Activated CD8-positive, alpha-beta T cell treated with anti-CD3 and anti-CD28 coated beads, Interleukin-2, amount 10 ng/mL, durations not matched to agents 7 days and 5 days (primary cell): ENCODE measurements at regions of chrX and their contacts with region 1.

Region 1: GRCh38 chrX:136577552-136577951 is 45.5 kb downstream of the VGLL1 start:
- DNase-seq: peak; percentile 84
- ATAC-seq: peak; percentile 99
- H3K4me3 Mint-ChIP-seq: no peak overlapping the region
- H3K27ac Mint-ChIP-seq: peak overlapping the region; percentile 76
- H3K4me1 Mint-ChIP-seq: peaks cover 24% of the 10 kb centered on the region
- H3K27me3 Mint-ChIP-seq: no peaks in the 10 kb centered on the region

Region 2: GRCh38 chrX:136496770-136497598 is 80.6 kb before region 1 on chrX and contains the start of gene HTATSF1:
- CTCF ChIA-PET with region 1: interaction called, 10 read pairs
- POLR2A ChIA-PET with region 1: no interaction called
- DNase-seq: peak; percentile 92
- ATAC-seq: peak; percentile 84
- H3K4me3 Mint-ChIP-seq: peak within 1 kb of the TSS; percentile 91
- H3K27ac Mint-ChIP-seq: peak within 1 kb of the TSS; percentile 95
- H3K4me1 Mint-ChIP-seq: peaks cover 28% of the 10 kb centered on the region
- H3K27me3 Mint-ChIP-seq: peaks cover 11% of the 10 kb centered on the region
- total RNA-seq, gene HTATSF1: 93.6 to 96.2 TPM

Region 3: DNA sequence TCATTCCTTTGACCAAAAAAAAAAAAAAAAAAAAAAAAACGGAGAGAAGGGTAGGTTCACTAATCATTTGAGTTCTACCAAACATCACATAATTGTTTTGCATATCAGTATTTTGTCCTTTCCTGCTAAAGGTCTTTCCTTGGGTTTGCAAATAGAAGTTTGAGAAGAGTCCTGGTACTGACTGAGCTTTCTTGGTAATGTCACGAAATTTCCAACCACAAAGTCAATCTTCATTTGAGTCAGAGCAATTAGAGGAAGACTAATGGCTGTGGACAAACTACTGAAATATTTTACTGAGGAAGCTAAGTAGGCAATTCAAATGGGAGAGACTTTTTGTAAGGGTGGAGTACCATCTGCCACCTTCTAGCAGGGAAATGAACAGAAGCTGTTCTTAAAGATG is 48.7 kb after region 1 on chrX:
- CTCF ChIA-PET with region 1: interaction called, 13 read pairs
- POLR2A ChIA-PET with region 1: no interaction called
- DNase-seq: no peak
- ATAC-seq: peak; percentile 14
- H3K4me3 Mint-ChIP-seq: peak overlapping the region; percentile 60
- H3K27ac Mint-ChIP-seq: peak overlapping the region; percentile 90
- H3K4me1 Mint-ChIP-seq: peaks cover 98% of the 10 kb centered on the region
- H3K27me3 Mint-ChIP-seq: no peaks in the 10 kb centered on the region

Region 4: GRCh38 chrX:136694431-136695087 is 117.0 kb after region 1 on chrX:
- CTCF ChIA-PET with region 1: interaction called, 34 read pairs
- POLR2A ChIA-PET with region 1: no interaction called
- DNase-seq: peak; percentile 31
- ATAC-seq: peak; percentile 61
- H3K4me3 Mint-ChIP-seq: peak overlapping the region; percentile 45
- H3K27ac Mint-ChIP-seq: peak overlapping the region; percentile 93
- H3K4me1 Mint-ChIP-seq: peaks cover 81% of the 10 kb centered on the region
- H3K27me3 Mint-ChIP-seq: no peaks in the 10 kb centered on the region

Region 5: GRCh38 chrX:136759968-136760367 is 182.4 kb after region 1 on chrX:
- CTCF ChIA-PET with region 1: no interaction called
- POLR2A ChIA-PET with region 1: no interaction called
- DNase-seq: no peak
- ATAC-seq: peak; percentile 41
- H3K4me3 Mint-ChIP-seq: no peak overlapping the region
- H3K27ac Mint-ChIP-seq: peak overlapping the region; percentile 15
- H3K4me1 Mint-ChIP-seq: peaks cover 72% of the 10 kb centered on the region
- H3K27me3 Mint-ChIP-seq: no peaks in the 10 kb centered on the region